ENCODE measurements at regions of chr7 and their contacts with region 1.

Region 1: DNA sequence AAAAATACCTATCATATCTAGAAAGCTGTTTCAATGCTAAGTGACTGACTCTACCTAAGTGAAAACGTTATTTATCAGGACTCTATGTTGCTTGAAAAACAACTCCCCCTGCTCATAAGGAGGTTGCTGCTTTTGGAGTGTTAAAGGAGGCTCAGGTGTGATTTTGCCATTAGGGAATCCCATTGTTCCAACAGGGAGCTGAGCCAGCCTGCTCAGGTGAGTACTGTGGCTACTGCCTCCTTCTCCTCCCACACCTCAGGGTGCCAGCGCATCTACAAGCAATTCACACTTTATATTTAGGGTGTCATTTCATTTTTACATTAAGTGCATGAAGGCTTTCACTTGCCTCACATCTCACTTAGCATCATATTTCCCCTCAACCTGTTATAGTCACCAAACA is 84.7 kb downstream of the SEM1 start:
- DNase-seq: no peak
- ATAC-seq: no peak
- H3K4me3 ChIP-seq: no peak overlapping the region
- H3K4me3 Mint-ChIP-seq: no peak overlapping the region
- H3K27ac ChIP-seq: no peak overlapping the region
- H3K27ac Mint-ChIP-seq: no peak overlapping the region
- H3K4me1 ChIP-seq: no peaks in the 10 kb centered on the region
- H3K4me1 Mint-ChIP-seq: no peaks in the 10 kb centered on the region
- H3K27me3 ChIP-seq: no peaks in the 10 kb centered on the region
- H3K27me3 Mint-ChIP-seq: no peaks in the 10 kb centered on the region
- CTCF ChIP-seq: no peak

Region 2: DNA sequence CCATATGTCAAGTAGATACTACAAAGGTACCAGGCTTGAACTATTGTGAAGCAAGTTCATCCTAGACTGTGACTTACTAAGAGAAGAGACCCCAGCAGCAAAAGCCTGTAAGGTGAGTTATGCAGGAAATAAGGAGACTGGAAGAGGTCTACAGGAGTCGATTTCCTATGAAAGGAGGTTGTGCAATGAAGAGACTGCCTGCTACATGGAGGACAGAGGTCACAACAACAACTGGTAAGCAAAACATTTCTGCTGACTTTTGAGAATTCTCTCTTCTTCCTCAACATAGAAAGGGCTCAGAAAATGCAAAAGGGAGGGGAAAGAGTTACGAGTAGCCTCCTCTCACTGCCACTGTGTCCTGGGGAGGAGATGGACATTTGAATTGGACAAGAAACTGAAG is 1071.0 kb before region 1 on chr7:
- CTCF ChIA-PET with region 1: no interaction called
- POLR2A ChIA-PET with region 1: no interaction called
- intact Hi-C with region 1: no loop called
- DNase-seq: no peak
- ATAC-seq: no peak
- H3K4me3 ChIP-seq: no peak overlapping the region
- H3K4me3 Mint-ChIP-seq: no peak overlapping the region
- H3K27ac ChIP-seq: no peak overlapping the region
- H3K27ac Mint-ChIP-seq: no peak overlapping the region
- H3K4me1 ChIP-seq: no peaks in the 10 kb centered on the region
- H3K4me1 Mint-ChIP-seq: no peaks in the 10 kb centered on the region
- H3K27me3 ChIP-seq: no peaks in the 10 kb centered on the region
- H3K27me3 Mint-ChIP-seq: peaks cover 10% of the 10 kb centered on the region
- CTCF ChIP-seq: no peak

Region 3: DNA sequence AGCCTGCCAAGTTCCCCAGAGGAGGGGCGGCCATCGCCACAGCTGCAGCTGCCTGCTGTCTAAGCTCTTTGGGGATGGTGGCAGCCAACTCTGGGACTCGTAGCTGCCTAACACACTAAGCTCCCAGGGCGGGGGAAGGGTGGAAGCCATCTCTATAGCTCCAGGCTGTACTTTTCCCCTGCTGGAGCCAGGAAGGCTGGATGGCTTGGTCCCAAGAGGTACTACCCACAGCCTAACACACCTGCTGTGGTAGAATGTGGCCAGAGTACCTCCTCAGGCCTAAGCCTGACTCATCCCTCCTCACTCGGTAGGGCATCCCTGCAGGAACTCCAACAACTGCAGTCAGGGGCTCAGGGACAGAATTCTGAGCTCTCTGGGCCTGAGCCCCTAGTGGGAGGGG is 955.3 kb after region 1 on chr7:
- CTCF ChIA-PET with region 1: no interaction called
- POLR2A ChIA-PET with region 1: no interaction called
- intact Hi-C with region 1: loop called in 1 of 2 experiments (anchors 5 kb)
- DNase-seq: peak in 1 of 14 experiments; percentile 6
- ATAC-seq: no peak
- H3K4me3 ChIP-seq: no peak overlapping the region
- H3K4me3 Mint-ChIP-seq: no peak overlapping the region
- H3K27ac ChIP-seq: no peak overlapping the region
- H3K27ac Mint-ChIP-seq: no peak overlapping the region
- H3K4me1 ChIP-seq: no peaks in the 10 kb centered on the region
- H3K4me1 Mint-ChIP-seq: no peaks in the 10 kb centered on the region
- H3K27me3 ChIP-seq: no peaks in the 10 kb centered on the region
- H3K27me3 Mint-ChIP-seq: no peaks in the 10 kb centered on the region
- CTCF ChIP-seq: no peak